ENCODE measurements at regions of chr10 and their contacts with region 1.

Region 1: DNA sequence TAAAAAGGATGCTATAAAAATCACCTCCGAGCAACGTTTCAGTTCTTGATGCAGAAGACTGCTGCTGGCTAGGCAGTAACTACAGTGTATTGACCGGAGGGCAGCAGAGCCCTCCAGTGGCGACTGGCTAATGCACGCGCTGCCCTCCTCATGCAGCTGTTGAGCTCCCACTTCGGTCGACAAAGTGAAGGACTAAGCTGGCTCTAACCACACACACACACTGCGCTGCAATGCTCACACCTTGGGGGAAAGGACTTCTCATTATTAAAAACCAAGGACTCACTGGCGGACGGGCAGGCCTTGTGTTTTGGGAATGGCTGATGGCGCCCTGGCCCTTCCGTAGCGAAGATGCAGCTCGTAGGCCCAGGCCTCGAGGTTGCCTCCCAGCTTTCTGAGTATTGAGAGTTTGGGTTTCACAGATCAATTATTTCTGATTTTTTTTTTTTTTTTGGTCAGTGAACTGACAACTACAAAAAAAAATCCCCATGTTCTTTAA is 120.9 kb upstream of the DIP2C start:
- DNase-seq: no peak
- H3K4me3 ChIP-seq: no peak overlapping the region
- CTCF ChIP-seq: peak; percentile 46

Region 2: DNA sequence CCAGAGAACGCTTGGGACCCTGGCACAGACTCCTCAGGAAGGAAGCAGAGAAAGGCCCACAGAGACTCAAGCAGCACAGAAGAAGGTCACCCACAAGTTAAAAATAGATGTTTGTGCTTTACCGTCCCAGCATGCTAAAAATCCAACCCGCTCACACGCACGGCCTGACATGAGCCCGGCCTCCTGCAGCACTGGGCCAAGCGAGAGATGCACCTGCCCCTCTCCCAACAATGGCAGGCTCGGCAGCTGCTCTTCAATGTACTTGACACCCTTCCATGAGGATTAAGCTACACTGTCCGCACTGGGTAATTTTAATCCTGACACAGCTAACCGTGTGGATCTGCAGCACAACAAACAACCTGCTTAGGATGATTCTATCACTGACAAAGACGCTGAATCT is 130.3 kb before region 1 on chr10:
- in situ Hi-C with region 1: no loop called
- DNase-seq: no peak
- H3K4me3 ChIP-seq: no peak overlapping the region
- CTCF ChIP-seq: no peak

Region 3: DNA sequence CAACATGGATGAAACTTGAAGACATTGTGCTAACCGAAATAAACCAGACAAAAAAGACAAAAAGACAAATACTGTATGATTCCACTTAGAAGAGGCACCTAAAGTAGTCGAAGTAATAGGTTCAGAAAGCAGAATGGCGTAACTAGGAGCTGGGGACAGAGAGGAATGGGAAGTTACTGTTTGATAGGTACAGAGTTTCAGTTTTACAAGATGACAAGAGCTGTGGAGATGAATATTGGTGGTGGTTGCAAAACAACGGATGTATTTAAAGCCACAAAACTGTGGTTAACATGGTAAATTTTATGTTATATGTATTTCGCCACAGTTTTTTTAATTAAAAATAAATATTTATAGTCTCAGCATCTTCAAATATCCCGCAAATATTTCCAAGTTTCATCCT is 56.9 kb before region 1 on chr10:
- in situ Hi-C with region 1: loop called (anchors 10 kb)
- DNase-seq: no peak
- H3K4me3 ChIP-seq: no peak overlapping the region
- CTCF ChIP-seq: no peak

Region 4: DNA sequence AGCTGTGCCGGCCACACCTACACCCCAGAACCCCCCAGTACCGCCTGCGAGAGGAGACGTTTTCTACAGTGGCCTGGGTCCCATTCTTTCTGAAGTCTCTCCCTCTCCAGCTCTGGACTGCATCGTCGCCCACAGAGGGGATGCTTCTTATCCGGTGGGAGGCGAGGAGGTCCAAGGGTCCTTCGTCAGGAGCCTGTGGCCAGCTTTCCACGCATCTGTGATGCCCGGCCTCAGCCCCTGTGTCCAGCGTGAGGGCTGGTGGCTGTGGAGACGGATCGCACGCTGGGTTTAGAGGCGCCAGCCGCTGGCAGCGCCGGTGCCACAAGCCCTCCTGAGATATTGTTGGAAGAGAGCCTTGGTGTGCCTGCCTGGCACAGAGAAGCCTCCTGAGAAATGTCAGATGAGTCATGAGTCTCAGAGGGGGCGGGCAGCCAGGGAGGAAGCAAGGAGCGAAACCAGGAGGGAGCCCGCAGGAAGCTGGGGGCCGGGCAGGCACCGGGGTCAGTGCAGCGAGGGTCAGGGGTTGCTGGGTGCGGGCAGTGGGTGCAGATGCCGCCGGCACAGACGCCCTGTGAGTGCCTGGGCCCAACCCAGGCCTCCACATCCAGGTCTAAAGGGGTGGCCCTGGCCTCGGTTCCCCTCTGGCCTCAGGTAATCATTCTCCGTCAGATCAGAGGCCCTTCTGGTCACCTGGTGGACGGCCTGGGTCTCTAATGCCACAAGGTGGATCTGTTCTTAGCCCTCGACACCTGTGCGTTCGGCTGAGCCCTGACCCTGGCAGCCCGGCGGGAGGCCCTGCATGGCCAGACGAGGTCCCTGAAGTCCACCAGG is 34.9 kb before region 1 on chr10:
- in situ Hi-C with region 1: no loop called
- DNase-seq: no peak
- H3K4me3 ChIP-seq: no peak overlapping the region
- CTCF ChIP-seq: no peak

Region 5: DNA sequence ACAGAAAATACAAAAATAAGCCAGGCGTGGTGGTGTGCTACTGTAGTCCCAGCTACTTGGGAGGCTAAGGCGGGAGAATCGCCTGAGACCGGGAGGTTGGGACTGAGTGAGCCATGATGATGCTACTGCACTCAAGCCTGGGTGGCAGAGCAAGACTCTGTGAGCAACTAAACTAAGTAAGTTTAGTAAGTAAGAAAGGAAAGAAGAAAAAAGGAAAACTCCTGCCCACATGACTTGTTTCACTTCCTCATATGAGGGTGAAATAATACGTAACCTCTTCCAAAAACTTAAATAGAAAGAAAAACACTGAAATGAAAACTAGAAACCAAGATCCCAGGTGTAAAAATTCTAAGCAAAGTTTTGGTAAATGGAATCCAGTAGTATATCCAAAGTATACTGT is 41.5 kb after region 1 on chr10:
- in situ Hi-C with region 1: no loop called
- DNase-seq: no peak
- H3K4me3 ChIP-seq: no peak overlapping the region
- CTCF ChIP-seq: no peak

Measured in astrocyte of the cerebellum (primary cell).